ENCODE measurements at regions of chr2 and their contacts with region 1.

Region 1: DNA sequence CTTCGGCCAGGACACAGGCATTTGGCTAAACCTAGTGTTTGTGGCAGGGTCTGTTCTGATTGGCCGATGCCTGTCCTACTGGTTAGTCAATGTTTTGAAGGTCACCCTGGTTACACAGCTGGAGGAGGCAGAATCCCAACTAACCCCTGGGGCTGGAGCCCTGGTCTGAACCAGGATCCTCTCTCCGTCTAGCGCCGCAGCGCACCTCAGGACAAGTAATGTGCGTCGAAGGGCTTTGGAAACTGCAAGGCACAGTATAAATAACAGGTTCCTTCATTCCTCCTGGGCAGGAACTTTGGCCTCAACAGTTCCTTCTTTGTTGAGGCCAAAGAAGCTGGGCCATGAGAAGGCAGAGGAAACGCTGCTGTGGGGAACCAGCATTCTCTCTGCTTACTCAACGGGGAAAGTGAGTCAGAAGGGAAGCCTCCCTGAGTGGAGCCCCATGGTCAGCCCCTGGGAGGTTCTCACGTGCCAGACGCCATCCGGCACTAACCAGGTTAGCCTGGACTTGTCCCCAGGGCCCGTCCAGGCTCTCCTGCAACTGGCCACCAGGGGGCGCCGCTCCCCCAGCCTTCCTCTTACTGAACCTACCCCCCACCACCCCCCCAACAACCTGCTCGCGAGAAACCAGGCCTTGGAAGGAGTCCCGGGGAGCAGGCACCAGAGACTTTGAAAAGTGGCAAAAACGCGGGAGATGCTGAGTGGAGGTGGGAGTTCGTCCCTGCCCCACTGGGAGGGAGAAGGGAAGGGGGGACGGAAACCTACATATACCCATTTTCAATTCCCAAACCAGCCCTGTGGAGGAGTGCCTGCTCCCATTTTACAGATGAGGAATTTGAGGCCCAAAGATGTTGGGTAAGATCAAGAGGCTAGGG is 19.8 kb downstream of the TEX44 start:
- DNase-seq: peak; percentile 92 to 95
- ATAC-seq: peak; percentile 69 to 84
- H3K4me3 ChIP-seq: peak overlapping the region; percentile 11; the same call in 1 of the 3 replicates
- H3K27ac ChIP-seq: peak overlapping the region; percentile 90 to 95
- H3K4me1 ChIP-seq: peaks cover 35% of the 10 kb centered on the region
- CTCF ChIP-seq: peak; percentile 95
- EP300 ChIP-seq: no peak
- POLR2A ChIP-seq: no peak
- RAD21 ChIP-seq: peak; percentile 94 to 99

Region 2: DNA sequence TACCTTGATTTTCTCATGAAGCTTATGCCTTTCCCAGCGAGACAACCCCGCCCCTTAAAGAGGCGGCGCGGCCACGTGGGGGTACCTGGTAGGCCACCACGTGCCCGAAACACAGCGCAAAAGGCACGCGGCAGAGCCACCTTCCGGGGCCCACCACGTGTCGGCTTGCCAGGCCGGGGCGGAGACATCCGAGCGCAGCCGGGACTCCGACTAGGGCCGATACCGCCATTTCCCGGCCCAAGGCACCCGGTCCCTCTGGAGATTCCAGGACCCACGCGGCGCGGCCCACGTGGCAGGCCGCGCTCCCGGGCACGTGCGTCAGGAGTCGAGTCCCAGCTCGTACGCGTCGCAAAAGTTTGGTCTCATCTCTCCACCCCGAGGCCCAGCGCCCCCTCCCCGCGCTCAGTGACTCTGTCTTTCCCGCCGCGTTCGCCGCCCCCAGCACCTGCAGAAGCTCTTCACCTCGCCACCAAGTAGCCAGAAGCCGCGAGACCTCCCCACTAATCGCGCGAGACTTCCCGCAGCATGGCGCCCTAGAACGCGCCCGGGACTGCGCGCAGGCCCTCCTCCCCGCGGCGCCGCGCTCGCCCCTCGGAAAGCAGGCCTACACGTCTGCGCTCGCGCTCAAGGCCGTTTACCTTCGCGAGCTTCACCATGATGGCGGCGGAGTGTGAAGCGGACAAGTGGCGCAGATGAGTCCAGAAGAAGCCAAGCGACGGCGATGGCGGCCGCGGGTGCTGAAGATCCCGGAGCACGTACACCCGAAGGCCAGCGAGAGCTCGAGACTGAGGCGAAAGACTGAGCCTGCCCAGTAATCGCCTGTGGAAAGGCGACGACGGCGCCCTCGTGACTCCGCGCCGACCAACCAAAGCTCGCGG is 148.5 kb before region 1 on chr2 and contains the start of gene NCL:
- CTCF ChIA-PET with region 1: no interaction called
- POLR2A ChIA-PET with region 1: interaction called, 11 read pairs
- DNase-seq: peak; percentile 46 to 99
- ATAC-seq: peak; percentile 86 to 95
- H3K4me3 ChIP-seq: peak within 1 kb of the TSS; percentile 93
- H3K27ac ChIP-seq: peak within 1 kb of the TSS; percentile 96 to 99
- H3K4me1 ChIP-seq: peaks cover 39% of the 10 kb centered on the region
- CTCF ChIP-seq: no peak
- EP300 ChIP-seq: no peak
- POLR2A ChIP-seq: peak; percentile 99
- RAD21 ChIP-seq: no peak
- polyA plus RNA-seq, gene NCL: 390 and 456 TPM in 2 replicates

Region 3: GRCh38 chr2:231597014-231597611 is 15.3 kb before region 1 on chr2:
- CTCF ChIA-PET with region 1: interaction called, 42 read pairs
- POLR2A ChIA-PET with region 1: interaction called, 5 read pairs
- DNase-seq: no peak
- ATAC-seq: peak in 1 of 2 experiments; percentile 4; a peak in 1 of 6 replicates
- H3K4me3 ChIP-seq: no peak overlapping the region
- H3K27ac ChIP-seq: no peak overlapping the region
- H3K4me1 ChIP-seq: peaks cover 8% of the 10 kb centered on the region; the same call in 1 of the 3 replicates
- CTCF ChIP-seq: no peak
- EP300 ChIP-seq: no peak
- POLR2A ChIP-seq: no peak
- RAD21 ChIP-seq: no peak

Region 4: GRCh38 chr2:231642631-231643494 is 30.4 kb after region 1 on chr2:
- CTCF ChIA-PET with region 1: interaction called, 4,158 read pairs
- POLR2A ChIA-PET with region 1: interaction called, 26 read pairs
- DNase-seq: peak; percentile 95 to 97
- ATAC-seq: peak; percentile 93
- H3K4me3 ChIP-seq: peak overlapping the region; percentile 16; the same call in 2 of the 3 replicates
- H3K27ac ChIP-seq: peak overlapping the region; percentile 93 to 96
- H3K4me1 ChIP-seq: peaks cover 49% of the 10 kb centered on the region
- CTCF ChIP-seq: no peak
- EP300 ChIP-seq: no peak; a peak in 1 of 5 replicates
- POLR2A ChIP-seq: peak; percentile 29; the same call in 1 of the 2 replicates
- RAD21 ChIP-seq: no peak

Region 5: DNA sequence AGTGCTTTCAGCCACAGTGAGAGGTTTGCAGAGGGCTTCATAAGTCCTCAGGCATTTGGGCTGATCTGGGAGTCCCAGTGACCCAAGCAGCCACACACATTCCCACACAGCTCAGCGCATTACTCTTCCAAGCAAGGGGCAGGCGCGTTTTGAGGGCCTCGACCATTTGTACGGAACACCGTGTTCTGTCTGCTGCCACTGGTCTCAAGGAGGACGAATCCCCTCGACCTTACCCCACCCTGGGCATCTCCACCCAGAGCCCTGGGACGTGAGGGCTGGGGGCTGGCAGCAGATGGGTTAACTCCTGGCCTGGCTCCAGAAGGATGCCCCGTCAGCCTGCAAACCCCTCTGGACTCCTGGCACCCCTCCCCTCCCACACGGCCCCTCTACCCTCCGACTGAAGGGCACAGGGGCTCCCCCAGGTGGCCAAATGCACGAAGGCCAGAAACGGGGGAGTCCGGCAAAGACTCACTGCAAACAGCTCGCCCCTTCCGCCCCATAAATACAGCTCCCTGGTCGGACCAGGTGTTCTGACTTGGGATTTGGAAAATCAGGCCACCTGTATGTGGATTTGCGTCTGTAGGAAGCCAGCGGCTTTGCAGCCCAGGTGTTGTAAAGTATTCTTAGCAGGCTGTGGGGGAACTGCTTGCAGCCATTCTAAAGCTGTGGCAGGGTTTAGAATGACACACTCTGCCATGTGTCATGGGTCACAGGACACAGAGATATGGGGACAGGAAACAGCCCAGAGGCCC is 62.3 kb after region 1 on chr2:
- CTCF ChIA-PET with region 1: interaction called, 4,158 read pairs
- POLR2A ChIA-PET with region 1: interaction called, 61 read pairs
- DNase-seq: peak in 1 of 2 experiments; percentile 70
- ATAC-seq: peak; percentile 42 to 60
- H3K4me3 ChIP-seq: no peak overlapping the region
- H3K27ac ChIP-seq: peak overlapping the region; percentile 97
- H3K4me1 ChIP-seq: peaks cover 43% of the 10 kb centered on the region
- CTCF ChIP-seq: peak; percentile 81
- EP300 ChIP-seq: no peak
- POLR2A ChIP-seq: no peak
- RAD21 ChIP-seq: peak; percentile 75 to 79

Region 6: GRCh38 chr2:231732604-231733003 is 120.2 kb after region 1 on chr2:
- CTCF ChIA-PET with region 1: interaction called, 14 read pairs
- POLR2A ChIA-PET with region 1: no interaction called
- DNase-seq: no peak
- ATAC-seq: peak in 1 of 2 experiments; percentile 60; a peak in 1 of 6 replicates
- H3K4me3 ChIP-seq: no peak overlapping the region
- H3K27ac ChIP-seq: no peak overlapping the region
- H3K4me1 ChIP-seq: no peaks in the 10 kb centered on the region
- CTCF ChIP-seq: no peak
- EP300 ChIP-seq: no peak
- POLR2A ChIP-seq: no peak
- RAD21 ChIP-seq: no peak